Naive thymus-derived CD4-positive, alpha-beta T cell (primary cell): ENCODE measurements at regions of chr16 and their contacts with region 1.

Region 1: DNA sequence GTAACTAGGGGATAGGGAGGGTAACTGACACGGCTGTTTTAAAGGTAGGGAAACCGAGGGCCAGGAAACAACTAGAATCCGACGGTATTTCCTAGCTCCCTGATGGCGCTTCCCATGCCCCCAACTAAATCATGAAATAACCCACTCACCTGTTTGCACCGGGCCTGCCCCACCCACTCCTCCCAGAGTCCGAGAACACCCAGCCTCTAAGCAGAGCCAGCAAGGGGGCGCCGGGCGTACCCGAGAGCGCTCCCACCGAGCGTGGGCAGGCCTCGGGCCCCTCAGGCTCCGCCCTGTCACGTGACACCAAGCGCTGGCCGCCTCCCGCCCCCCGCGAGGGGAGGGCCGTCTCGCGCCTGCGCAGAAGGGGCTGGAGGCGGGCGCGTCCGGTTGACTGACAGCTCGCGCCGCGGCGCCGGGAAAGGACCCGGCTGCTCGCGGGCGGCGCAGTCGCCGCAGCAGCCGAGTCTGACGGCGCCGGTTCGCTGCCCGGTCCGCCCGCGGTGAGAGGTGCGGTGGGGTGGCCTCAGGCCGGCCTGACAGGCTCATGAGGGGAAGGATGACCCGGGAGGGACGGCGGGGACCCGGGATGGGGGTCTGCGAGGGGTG is at the start of gene KIAA0513:
- DNase-seq: peak; percentile 93 to 100 (median 97)
- ATAC-seq: peak; percentile 87
- H3K4me3 ChIP-seq: peak within 1 kb of the TSS; percentile 85
- H3K4me3 Mint-ChIP-seq: peak within 1 kb of the TSS; percentile 88 to 94 (median 92)
- H3K27ac ChIP-seq: peak within 1 kb of the TSS; percentile 93
- H3K27ac Mint-ChIP-seq: peak within 1 kb of the TSS; percentile 73 to 96 (median 94)
- H3K4me1 ChIP-seq: peaks cover 22 to 23% of the 10 kb centered on the region in 2 donors
- H3K4me1 Mint-ChIP-seq: peaks cover 25 to 40% (median 33%) of the 10 kb centered on the region in 7 donors
- H3K27me3 ChIP-seq: no peaks in the 10 kb centered on the region
- H3K27me3 Mint-ChIP-seq: no peaks in the 10 kb centered on the region
- total RNA-seq, gene KIAA0513: 9.5 to 28.9 (median 15.1) TPM

Region 2: GRCh38 chr16:84144859-84145639 is 882.4 kb before region 1 on chr16 and contains the starts of genes DNAAF1 and HSDL1:
- CTCF ChIA-PET with region 1: no interaction called
- POLR2A ChIA-PET with region 1: no interaction called
- intact Hi-C with region 1: loop called in 1 of 2 experiments (anchors 5 kb)
- DNase-seq: peak; percentile 88 to 99 (median 94)
- ATAC-seq: peak; percentile 95
- H3K4me3 ChIP-seq: peak within 1 kb of the TSS; percentile 68
- H3K4me3 Mint-ChIP-seq: peak within 1 kb of the TSS; percentile 91 to 98 (median 94)
- H3K27ac ChIP-seq: peak within 1 kb of the TSS; percentile 87
- H3K27ac Mint-ChIP-seq: peak within 1 kb of the TSS; percentile 79 to 95 (median 89)
- H3K4me1 ChIP-seq: peaks cover 4 to 8% of the 10 kb centered on the region in 2 donors
- H3K4me1 Mint-ChIP-seq: peaks cover 9 to 32% (median 29%) of the 10 kb centered on the region in 7 donors
- H3K27me3 ChIP-seq: no peaks in the 10 kb centered on the region
- H3K27me3 Mint-ChIP-seq: peaks cover 0 to 22% (median 0%) of the 10 kb centered on the region in 5 donors
- total RNA-seq, gene DNAAF1: 0.66 to 2.2 TPM in 2 of 5 experiments, not detected in the others
- total RNA-seq, gene HSDL1: 12.6 to 26.6 (median 14.4) TPM

Region 3: GRCh38 chr16:84599521-84600202 is 427.8 kb before region 1 on chr16:
- CTCF ChIA-PET with region 1: no interaction called
- POLR2A ChIA-PET with region 1: interaction called, 3 read pairs
- intact Hi-C with region 1: loop called in 1 of 2 experiments (anchors 5 kb)
- DNase-seq: peak in 6 of 9 donors; percentile 41 to 78 (median 50)
- ATAC-seq: peak; percentile 39
- H3K4me3 ChIP-seq: peak overlapping the region; percentile 44
- H3K4me3 Mint-ChIP-seq: peak overlapping the region; percentile 78 to 94 (median 87)
- H3K27ac ChIP-seq: peak overlapping the region; percentile 87
- H3K27ac Mint-ChIP-seq: peak overlapping the region; percentile 90 to 98 (median 97)
- H3K4me1 ChIP-seq: peaks cover 82 to 90% of the 10 kb centered on the region in 2 donors
- H3K4me1 Mint-ChIP-seq: peaks cover 73 to 94% (median 88%) of the 10 kb centered on the region in 7 donors
- H3K27me3 ChIP-seq: no peaks in the 10 kb centered on the region
- H3K27me3 Mint-ChIP-seq: peaks cover 0 to 4% (median 0%) of the 10 kb centered on the region in 5 donors

Region 4: DNA sequence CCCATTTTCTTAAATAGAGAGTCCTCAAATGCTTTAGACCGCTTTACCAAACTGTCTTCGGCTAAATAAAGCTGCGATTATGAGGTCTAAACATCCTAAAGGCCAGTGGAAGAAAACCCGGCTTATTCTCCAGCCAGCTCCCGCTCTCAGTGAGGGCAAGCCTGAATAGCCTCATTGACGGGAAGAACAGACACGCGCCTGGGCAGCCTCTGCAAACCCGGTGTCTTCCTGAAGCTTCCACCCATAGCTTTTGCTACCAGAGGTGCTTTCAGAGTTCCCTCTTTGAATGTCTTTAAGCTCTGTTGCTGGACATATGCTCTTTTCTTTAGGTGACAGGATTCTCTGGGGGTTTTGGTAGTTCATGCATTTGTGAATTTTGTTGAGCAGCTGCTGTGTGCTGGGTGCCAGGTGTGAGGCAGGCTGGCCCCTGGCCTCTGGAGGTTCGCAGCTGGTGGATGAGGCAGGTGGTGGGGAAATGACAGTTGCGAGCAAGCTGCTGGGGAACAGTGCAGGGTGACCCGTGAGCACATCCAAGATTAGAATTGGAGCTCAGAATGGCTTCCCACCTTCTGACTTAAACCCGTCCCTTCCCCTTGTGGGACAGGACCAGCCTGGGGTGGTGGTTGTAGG is 163.0 kb before region 1 on chr16:
- CTCF ChIA-PET with region 1: no interaction called
- POLR2A ChIA-PET with region 1: no interaction called
- intact Hi-C with region 1: no loop called
- DNase-seq: no peak
- ATAC-seq: no peak
- H3K4me3 ChIP-seq: no peak overlapping the region
- H3K4me3 Mint-ChIP-seq: no peak overlapping the region
- H3K27ac ChIP-seq: no peak overlapping the region
- H3K27ac Mint-ChIP-seq: no peak overlapping the region
- H3K4me1 ChIP-seq: no peaks in the 10 kb centered on the region
- H3K4me1 Mint-ChIP-seq: no peaks in the 10 kb centered on the region
- H3K27me3 ChIP-seq: no peaks in the 10 kb centered on the region
- H3K27me3 Mint-ChIP-seq: peaks cover 0 to 9% (median 0%) of the 10 kb centered on the region in 5 donors

Region 5: GRCh38 chr16:85010931-85011845 is 16.3 kb before region 1 on chr16 and contains the start of gene ZDHHC7:
- CTCF ChIA-PET with region 1: interaction called, 5 read pairs
- POLR2A ChIA-PET with region 1: interaction called, 41 read pairs
- intact Hi-C with region 1: loop called (anchors 1 kb)
- DNase-seq: peak; percentile 76 to 87 (median 85)
- ATAC-seq: peak; percentile 96
- H3K4me3 ChIP-seq: peak within 1 kb of the TSS; percentile 99
- H3K4me3 Mint-ChIP-seq: peak within 1 kb of the TSS; percentile 94 to 100 (median 98)
- H3K27ac ChIP-seq: peak within 1 kb of the TSS; percentile 92
- H3K27ac Mint-ChIP-seq: peak within 1 kb of the TSS; percentile 95 to 100 (median 99)
- H3K4me1 ChIP-seq: peaks cover 14 to 16% of the 10 kb centered on the region in 2 donors
- H3K4me1 Mint-ChIP-seq: peaks cover 27 to 59% (median 43%) of the 10 kb centered on the region in 7 donors
- H3K27me3 ChIP-seq: no peaks in the 10 kb centered on the region
- H3K27me3 Mint-ChIP-seq: peaks cover 0 to 5% (median 0%) of the 10 kb centered on the region in 5 donors
- total RNA-seq, gene ZDHHC7: 31.7 to 62.2 (median 33.4) TPM

Region 6: DNA sequence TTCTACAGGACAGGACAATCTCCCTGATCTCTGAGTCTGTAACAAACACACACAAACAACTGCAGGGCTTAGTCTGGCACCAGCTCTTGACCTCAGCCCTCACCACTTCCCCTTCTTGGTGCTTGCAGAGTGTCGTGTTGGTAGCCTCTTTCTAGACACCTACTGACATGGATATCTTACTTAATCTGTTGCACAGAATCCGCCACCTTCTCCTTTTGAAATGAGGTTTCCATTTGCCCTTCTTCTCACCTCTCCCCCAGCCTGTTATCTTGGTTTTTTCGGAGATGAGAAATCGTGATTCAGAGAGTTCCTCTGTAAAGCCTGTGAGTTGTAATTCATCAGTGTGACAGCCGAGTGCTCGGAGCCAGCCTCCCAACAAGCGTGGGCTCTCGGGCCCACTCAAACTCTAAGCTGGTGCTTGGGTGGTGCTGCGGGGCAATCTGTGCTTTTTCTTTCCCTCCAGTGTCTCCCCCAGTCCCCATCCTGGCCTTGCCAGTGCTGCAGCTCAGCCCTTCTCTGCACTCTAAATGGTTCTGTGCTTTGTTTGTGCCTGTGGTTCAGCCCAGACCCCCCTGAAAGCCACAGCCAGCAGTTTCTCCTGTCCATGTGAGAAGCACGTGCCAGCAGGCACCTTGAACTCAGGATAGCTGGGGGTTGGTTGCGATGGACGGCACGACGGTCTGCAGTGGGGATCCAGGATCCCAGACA is 28.2 kb after region 1 on chr16:
- CTCF ChIA-PET with region 1: interaction called, 7 read pairs
- POLR2A ChIA-PET with region 1: interaction called, 37 read pairs
- intact Hi-C with region 1: loop called (anchors 1 kb)
- DNase-seq: peak; percentile 29 to 90 (median 70)
- ATAC-seq: peak; percentile 96
- H3K4me3 ChIP-seq: peak overlapping the region; percentile 19
- H3K4me3 Mint-ChIP-seq: peak overlapping the region; percentile 76 to 90 (median 84)
- H3K27ac ChIP-seq: peak overlapping the region; percentile 72
- H3K27ac Mint-ChIP-seq: peak overlapping the region; percentile 91 to 99 (median 96)
- H3K4me1 ChIP-seq: peaks cover 25 to 37% of the 10 kb centered on the region in 2 donors
- H3K4me1 Mint-ChIP-seq: peaks cover 32 to 58% (median 37%) of the 10 kb centered on the region in 7 donors
- H3K27me3 ChIP-seq: no peaks in the 10 kb centered on the region
- H3K27me3 Mint-ChIP-seq: no peaks in the 10 kb centered on the region

Region 7: DNA sequence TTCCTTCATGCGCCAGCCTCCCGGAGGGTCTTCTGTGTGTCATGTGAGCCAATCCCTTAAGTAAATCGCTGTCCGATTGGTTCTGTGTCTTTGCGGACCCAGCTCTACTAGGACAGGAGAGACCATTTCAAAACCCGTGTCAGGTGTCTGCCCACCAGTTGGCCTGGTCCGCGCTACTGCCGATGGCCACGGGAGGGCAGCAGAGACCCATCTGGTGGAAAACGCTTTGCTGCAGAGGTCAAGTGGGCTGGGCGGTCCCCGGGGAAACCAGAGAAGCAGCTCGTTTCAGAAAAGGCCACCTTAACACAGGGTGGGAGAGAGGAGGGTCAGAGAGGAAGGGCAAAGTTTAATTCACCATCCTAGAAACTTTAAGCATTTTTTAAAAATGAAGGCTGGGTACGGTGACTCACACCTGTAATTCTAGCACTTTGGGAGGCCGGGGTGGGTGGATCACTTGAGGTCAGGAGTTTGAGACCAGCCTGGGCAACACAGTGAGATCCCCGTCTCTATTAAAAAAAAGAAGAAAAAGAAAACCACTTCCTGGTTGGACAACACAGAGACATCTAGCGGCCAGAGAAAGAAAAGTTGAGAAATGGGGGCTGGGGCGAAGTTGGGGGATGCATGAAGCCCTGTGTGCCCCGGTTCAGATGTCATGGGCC is 87.6 kb after region 1 on chr16:
- CTCF ChIA-PET with region 1: interaction called, 7 read pairs
- POLR2A ChIA-PET with region 1: no interaction called
- intact Hi-C with region 1: loop called in 1 of 2 experiments (anchors 1 kb)
- DNase-seq: peak; percentile 40 to 87 (median 62)
- ATAC-seq: peak; percentile 92
- H3K4me3 ChIP-seq: peak overlapping the region; percentile 11
- H3K4me3 Mint-ChIP-seq: peak overlapping the region; percentile 53 to 86 (median 74)
- H3K27ac ChIP-seq: no peak overlapping the region
- H3K27ac Mint-ChIP-seq: peak overlapping the region in 8 of 9 donors; percentile 45 to 90 (median 72)
- H3K4me1 ChIP-seq: peaks cover 3 to 10% of the 10 kb centered on the region in 2 donors
- H3K4me1 Mint-ChIP-seq: peaks cover 0 to 15% (median 11%) of the 10 kb centered on the region in 7 donors
- H3K27me3 ChIP-seq: no peaks in the 10 kb centered on the region
- H3K27me3 Mint-ChIP-seq: no peaks in the 10 kb centered on the region

Region 8: DNA sequence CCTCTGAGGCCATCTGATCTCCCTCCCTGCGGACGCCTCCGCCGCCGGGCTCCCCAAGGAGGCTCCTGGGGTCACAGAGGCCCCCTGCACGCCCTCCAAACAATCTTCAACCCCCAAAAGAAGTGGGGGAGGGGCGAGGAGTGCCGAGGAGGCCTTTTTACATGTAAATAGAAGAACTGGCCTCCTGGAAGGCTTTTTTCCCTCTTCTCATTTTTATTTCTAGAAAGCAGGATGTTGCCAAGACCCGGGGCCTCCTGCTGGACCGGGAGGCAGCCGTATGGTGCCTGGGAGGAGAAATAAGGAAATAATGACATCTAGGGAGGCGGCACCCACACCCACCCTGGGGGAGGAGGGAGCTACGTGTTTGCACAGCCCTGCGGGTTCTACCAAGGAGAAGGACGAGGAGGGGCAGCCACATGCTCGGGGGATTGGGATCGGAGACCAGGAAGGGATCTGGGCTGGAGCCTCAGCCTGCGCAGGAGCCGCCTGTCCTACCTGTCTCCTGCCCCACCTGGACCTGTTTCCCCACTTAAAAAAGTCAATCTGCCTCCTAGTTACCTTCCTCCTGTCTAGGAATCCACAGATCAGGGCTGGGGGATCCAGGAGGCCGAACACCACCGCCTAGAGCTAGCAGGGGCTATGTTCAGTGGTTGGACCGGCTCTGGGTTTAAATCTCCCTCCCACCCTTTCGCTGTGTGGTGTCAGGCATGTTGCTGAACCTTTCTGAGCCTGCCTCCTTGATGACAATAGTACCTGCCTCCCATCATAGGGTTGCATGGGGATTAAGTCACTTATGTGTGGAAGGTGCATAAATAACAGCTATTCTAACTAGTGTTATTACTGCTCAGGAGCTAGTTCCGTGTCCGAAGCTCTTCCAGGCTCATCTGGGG is 410.0 kb after region 1 on chr16:
- CTCF ChIA-PET with region 1: no interaction called
- POLR2A ChIA-PET with region 1: no interaction called
- intact Hi-C with region 1: no loop called
- DNase-seq: no peak
- ATAC-seq: no peak
- H3K4me3 ChIP-seq: no peak overlapping the region
- H3K4me3 Mint-ChIP-seq: no peak overlapping the region
- H3K27ac ChIP-seq: no peak overlapping the region
- H3K27ac Mint-ChIP-seq: no peak overlapping the region
- H3K4me1 ChIP-seq: no peaks in the 10 kb centered on the region
- H3K4me1 Mint-ChIP-seq: peaks cover 0 to 10% (median 0%) of the 10 kb centered on the region in 7 donors
- H3K27me3 ChIP-seq: no peaks in the 10 kb centered on the region
- H3K27me3 Mint-ChIP-seq: no peaks in the 10 kb centered on the region

Region 9: DNA sequence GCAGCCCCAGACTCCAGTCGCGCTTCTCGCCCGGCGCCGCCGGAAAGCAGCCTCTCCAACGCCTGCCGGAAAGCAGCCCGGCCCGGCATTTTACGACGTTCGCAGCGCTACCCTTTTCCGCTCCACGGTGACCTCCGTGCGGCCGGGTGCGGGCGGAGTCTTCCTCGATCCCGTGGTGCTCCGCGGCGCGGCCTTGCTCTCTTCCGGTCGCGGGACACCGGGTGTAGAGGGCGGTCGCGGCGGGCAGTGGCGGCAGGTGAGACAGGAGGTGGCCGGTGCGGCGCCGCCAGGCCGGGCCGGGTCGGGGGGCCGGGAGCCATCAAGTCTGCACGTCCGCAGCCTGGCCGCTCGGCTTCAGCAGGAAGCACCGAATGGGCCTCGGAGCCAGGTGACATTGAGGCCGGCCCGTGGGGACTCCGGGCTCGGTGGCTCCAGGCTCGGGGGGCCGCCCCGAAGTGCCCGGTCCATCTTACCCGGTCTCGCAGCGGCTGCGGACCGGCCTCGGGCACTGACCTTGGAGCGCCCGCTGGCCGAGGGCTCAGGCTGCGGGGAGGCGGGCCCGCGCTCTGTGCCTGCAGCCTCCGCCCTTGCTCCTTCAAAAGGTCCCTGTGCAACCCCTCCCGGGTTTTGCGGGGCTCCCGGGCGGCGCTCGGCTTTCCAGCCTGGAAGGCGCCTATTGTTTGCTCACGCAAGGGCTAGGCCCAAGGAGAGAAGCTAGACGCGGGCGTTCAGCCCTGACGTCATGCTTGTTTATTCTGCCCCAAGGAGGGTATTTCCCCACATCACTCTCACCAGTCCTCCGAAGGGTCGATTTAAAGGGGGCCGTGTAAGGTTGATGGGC is 772.3 kb after region 1 on chr16 and contains the starts of genes COX4I1 and EMC8:
- CTCF ChIA-PET with region 1: no interaction called
- POLR2A ChIA-PET with region 1: no interaction called
- intact Hi-C with region 1: loop called in 1 of 2 experiments (anchors 5 kb)
- DNase-seq: peak; percentile 86 to 95 (median 90)
- ATAC-seq: peak; percentile 92
- H3K4me3 ChIP-seq: peak within 1 kb of the TSS; percentile 81
- H3K4me3 Mint-ChIP-seq: peak within 1 kb of the TSS; percentile 86 to 94 (median 90)
- H3K27ac ChIP-seq: peak within 1 kb of the TSS; percentile 99
- H3K27ac Mint-ChIP-seq: peak within 1 kb of the TSS; percentile 90 to 98 (median 95)
- H3K4me1 ChIP-seq: peaks cover 18 to 26% of the 10 kb centered on the region in 2 donors
- H3K4me1 Mint-ChIP-seq: peaks cover 37 to 77% (median 68%) of the 10 kb centered on the region in 7 donors
- H3K27me3 ChIP-seq: no peaks in the 10 kb centered on the region
- H3K27me3 Mint-ChIP-seq: no peaks in the 10 kb centered on the region
- total RNA-seq, gene COX4I1: 479 to 692 (median 661) TPM
- total RNA-seq, gene EMC8: 22.4 to 31.8 (median 28.7) TPM